Posterior cingulate gyrus (tissue), 11 donors: ENCODE measurements at regions of chr9 and their contacts with region 1.

Region 1: GRCh38 chr9:79477955-79478771 is 93.6 kb upstream of the TLE4 start:
- DNase-seq: peak in 7 of 10 donors; percentile 14 to 83 (median 43)

Region 2: DNA sequence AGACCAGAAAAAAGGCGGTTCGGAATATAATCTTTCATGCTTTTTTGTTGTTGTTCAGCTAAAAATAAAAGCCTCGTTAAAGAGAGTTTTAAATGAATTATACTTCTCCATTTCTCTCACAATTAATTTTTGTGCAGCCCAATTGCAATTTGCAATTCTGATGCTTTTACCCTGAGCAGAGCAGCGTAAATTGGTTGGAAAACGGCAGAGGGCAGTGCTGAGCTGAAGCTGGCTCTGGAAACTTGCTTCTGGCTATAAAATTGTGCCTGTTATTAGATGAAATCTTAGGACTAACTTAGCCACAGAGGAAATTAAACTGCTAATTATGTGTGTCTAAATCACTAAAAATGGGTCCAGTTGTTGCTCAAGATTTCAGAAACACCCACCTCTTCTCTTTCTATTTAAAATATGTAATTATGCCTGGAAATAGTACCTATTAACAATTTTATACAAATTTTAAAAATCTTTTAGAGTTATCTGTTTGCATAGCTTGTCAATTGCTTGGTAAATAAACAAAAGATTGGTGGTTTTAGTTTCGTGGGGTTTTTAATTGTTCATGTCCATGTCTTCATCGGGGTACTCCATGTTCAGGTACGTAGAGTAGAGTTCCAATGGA is 348.2 kb before region 1 on chr9:
- intact Hi-C with region 1: no loop called
- DNase-seq: peak; percentile 33 to 93 (median 68)

Region 3: GRCh38 chr9:79237861-79238260 is 240.3 kb before region 1 on chr9:
- intact Hi-C with region 1: no loop called
- DNase-seq: no peak

Region 4: DNA sequence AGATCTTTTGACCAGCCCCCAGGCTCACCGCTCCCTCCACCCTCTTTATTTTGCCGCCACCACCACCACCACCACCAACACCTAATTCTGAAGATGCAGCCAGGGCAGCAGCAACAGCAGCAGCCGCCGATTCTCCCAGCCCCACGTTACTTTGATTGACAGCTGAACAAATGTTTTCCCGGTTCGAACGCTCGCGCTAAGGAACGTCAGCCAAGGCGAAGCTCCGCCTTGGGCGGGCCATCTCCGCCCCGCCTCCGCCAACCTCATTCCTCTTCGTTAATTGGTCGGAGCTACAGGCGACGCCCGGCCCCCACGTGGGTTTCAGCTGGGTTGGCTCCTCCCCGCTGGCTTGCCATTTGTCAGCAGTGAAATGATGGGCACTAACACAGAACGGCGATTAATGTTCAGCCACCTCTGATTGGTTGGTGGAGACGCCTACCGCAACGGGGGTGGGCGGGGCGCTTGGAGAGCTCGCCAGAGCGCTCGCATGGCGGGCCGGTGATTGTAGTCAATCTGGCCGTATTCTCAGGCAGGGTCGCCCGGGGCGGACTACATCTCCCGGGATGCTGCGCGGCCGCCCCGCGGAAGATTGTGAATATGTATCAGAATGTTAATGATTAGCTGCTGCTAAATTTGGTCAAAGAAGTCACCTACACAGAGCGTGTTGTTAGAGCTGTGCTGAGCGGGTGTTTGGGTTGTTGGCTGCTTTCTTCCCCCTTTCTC is 93.3 kb after region 1 on chr9 and contains the start of gene TLE4:
- intact Hi-C with region 1: loop called (anchors 5 kb)
- DNase-seq: peak; percentile 100

Region 5: DNA sequence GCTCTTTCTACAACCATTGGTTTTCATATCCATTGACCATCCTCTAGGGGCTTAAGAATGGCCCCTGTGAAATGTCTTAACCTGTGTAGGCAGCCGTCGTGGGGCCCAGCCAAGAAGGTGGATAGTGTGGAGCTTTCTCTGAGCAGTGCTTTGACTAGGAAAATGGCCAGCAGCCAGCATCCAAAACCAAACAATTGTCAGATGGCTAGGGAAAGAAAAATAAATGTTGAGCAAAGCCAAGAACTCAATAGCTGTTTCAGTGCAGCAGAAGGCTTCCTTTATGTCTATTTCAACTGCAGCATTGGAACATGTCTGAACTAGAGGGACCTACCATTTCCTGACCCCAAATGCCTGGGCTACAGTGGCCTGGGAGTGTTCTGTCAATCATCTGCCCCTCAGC is 468.5 kb after region 1 on chr9:
- intact Hi-C with region 1: loop called (anchors 10 kb)
- DNase-seq: no peak